ENCODE measurements at regions of chr12 and their contacts with region 1.

Region 1: DNA sequence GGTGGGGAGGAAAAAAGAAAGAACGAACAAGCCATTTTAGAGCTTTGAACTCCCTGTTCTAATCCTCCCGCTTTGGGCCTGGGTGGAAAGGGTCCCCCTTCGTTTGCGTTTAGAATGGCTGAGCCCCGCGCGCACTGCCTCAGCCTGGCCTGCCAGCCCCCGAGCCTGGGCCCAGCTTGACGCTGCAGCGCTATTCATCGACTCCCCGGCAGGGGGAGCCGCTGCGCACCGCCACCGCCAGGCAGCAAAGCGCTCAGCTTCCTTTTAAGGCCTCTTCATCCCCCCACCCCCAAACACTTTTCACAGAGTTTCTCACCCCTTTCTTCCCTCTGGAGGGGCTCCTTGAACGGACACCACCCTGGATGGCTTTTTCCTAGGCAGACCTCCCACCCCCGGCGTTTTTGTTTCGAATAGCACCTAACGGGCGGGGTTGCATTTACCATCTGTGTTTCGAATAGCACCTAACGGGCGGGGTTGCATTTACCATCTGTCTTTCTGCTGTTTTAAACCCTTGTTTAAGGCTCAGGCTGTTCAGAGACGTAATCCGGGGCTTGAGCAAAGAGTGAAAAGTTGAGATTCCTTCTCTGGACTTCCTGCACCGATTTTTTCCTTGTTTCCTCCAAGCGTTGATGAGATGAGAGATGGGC is 56.4 kb upstream of the PIWIL1 start:
- DNase-seq: peak; percentile 27
- ATAC-seq: no peak
- H3K4me3 Mint-ChIP-seq: no peak overlapping the region
- H3K27ac Mint-ChIP-seq: no peak overlapping the region
- H3K4me1 Mint-ChIP-seq: no peaks in the 10 kb centered on the region
- H3K27me3 Mint-ChIP-seq: no peaks in the 10 kb centered on the region
- CTCF ChIP-seq: no peak

Region 2: DNA sequence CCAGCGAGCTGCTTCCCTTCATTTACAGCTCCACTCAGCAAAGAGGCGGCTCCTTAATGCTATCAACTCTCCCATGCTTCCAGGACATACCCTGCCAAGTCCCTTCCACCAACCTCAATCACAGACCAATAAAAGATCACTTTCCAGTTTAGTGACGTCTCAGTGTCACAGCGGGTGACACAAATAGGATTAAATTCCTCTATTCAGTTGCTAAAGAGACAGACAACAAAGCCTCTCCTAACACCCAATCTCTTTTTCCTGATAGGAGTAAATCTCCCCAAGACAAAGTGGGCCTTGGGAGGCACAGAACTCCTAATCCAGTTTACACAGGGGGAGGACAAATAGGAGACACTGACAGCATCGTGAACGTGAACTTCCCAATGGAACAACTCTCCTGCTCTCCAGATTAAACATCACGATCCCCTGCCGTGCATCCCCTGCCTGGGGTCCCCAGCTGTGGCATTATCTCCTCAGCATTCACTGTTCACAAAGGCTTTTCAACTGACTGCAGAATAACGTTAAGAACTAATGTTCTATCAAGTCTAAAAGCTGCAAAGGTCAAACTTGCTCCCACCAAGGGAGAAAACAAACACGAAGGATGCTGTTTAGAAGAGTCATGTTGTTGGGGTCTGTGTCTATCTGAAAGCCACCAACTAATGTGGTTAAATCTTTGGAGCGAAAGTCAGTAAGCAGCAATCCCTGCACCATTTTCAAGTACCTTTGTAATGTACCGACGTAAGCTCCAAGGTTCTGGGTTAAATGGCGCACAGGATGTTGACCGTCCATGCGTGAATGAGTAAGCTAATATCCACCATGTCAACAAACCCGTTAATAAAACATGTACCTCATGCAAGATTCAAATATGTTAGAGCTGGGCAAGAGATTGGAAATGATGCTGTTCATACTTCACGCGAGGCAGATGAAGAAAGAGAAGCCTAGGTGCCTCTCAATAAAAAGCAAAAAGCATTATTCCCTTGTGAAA is 409.0 kb before region 1 on chr12:
- CTCF ChIA-PET with region 1: no interaction called
- POLR2A ChIA-PET with region 1: no interaction called
- intact Hi-C with region 1: no loop called
- DNase-seq: no peak
- ATAC-seq: no peak
- H3K4me3 Mint-ChIP-seq: no peak overlapping the region
- H3K27ac Mint-ChIP-seq: no peak overlapping the region
- H3K4me1 Mint-ChIP-seq: no peaks in the 10 kb centered on the region
- H3K27me3 Mint-ChIP-seq: no peaks in the 10 kb centered on the region
- CTCF ChIP-seq: no peak

Region 3: DNA sequence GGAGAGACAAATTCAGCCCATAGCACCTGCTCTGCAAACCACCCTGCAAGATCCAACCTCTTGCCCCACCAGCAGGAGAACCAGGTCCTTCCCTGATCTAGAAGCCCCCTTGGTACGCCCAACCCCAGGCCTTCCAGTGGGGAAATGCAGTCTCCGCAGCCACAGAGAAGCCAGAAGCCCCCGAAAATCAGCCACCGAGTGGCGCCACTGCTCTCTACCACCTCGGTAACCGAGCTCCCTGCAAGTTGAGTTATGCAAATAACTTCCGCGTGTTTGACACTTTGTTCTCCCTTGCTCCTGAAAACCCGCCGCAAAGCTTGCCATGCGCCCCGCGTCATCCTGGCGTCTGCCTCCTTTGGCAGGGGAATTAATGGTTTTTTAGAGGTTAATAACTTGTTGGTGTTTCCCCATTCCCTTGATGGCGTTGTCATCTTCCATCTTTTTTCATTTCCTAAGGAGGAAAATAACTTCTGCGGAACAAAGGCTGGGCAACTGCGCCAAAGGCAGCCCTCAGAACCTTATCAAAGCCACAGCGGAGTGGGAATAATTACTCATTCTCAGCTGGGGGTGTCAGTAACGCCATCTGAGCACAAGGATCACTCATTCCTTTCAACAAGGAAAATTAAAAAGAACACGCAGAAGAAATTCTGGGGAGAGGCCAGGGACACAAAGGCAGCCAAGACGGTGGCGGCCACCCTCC is 58.6 kb before region 1 on chr12:
- CTCF ChIA-PET with region 1: no interaction called
- POLR2A ChIA-PET with region 1: no interaction called
- intact Hi-C with region 1: loop called (anchors 10 kb)
- DNase-seq: no peak
- ATAC-seq: no peak
- H3K4me3 Mint-ChIP-seq: no peak overlapping the region
- H3K27ac Mint-ChIP-seq: no peak overlapping the region
- H3K4me1 Mint-ChIP-seq: no peaks in the 10 kb centered on the region
- H3K27me3 Mint-ChIP-seq: no peaks in the 10 kb centered on the region
- CTCF ChIP-seq: no peak